Thyroid gland (tissue), 4 donors: ENCODE measurements at regions of chr18 and their contacts with region 1.

Region 1: GRCh38 chr18:36481201-36481657 is 183.7 kb downstream of the FHOD3 start:
- DNase-seq: no peak
- H3K4me3 ChIP-seq: no peak overlapping the region
- H3K27ac ChIP-seq: no peak overlapping the region
- H3K4me1 ChIP-seq: no peaks in the 10 kb centered on the region
- H3K27me3 ChIP-seq: no peaks in the 10 kb centered on the region
- CTCF ChIP-seq: no peak
- POLR2A ChIP-seq: no peak

Region 2: DNA sequence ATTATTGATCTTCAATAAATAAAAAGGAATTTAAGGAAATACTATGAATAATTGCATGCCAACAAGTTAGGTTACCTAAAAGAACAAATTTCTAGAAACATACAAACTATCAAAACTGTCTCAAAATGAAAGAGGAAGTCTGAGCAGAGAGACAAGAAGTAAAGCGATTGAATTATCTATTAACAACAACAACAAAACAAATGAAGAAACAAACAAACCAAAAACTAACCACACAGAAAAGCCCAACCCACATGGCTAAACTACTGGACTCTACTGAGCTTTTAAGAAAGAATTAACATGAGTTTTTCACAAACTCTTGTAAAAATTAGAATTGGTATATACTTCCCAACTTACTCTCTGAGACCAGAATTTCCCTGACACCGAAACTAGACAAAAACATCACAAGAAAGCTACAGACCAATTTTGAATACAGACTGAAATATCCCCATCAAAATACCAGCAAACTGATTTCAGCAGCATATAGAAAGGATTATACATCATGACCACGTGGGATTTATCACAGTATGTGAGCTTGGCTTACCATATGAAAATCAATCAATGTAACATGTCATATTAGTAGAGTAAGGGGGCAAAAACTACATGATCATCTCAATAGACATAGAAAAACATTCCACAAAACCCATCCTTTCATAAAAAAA is 916.3 kb before region 1 on chr18:
- intact Hi-C with region 1: no loop called
- DNase-seq: no peak
- H3K4me3 ChIP-seq: no peak overlapping the region
- H3K27ac ChIP-seq: no peak overlapping the region
- H3K4me1 ChIP-seq: no peaks in the 10 kb centered on the region
- H3K27me3 ChIP-seq: no peaks in the 10 kb centered on the region
- CTCF ChIP-seq: no peak
- POLR2A ChIP-seq: no peak

Region 3: GRCh38 chr18:36543991-36544725 is 62.9 kb after region 1 on chr18:
- intact Hi-C with region 1: loop called (anchors 10 kb)
- DNase-seq: peak; percentile 89 to 91
- H3K4me3 ChIP-seq: no peak overlapping the region
- H3K27ac ChIP-seq: peak overlapping the region; percentile 27 to 75 (median 65)
- H3K4me1 ChIP-seq: peaks cover 0 to 10% of the 10 kb centered on the region in 2 donors
- H3K27me3 ChIP-seq: no peaks in the 10 kb centered on the region
- CTCF ChIP-seq: no peak
- POLR2A ChIP-seq: no peak